Esophagus muscularis mucosa (tissue), 4 donors: ENCODE measurements at regions of chr19 and their contacts with region 1.

Region 1: GRCh38 chr19:49097455-49098288 is 12.4 kb downstream of the SNRNP70 start:
- DNase-seq: no peak
- H3K4me3 ChIP-seq: no peak overlapping the region
- H3K27ac ChIP-seq: peak overlapping the region in 1 of 4 donors; percentile 38
- H3K4me1 ChIP-seq: peaks cover 14 to 33% (median 29%) of the 10 kb centered on the region in 4 donors
- H3K27me3 ChIP-seq: no peaks in the 10 kb centered on the region
- CTCF ChIP-seq: peak in 2 of 3 experiments; percentile 98 to 99
- EP300 ChIP-seq: no peak
- POLR2A ChIP-seq: no peak

Region 2: DNA sequence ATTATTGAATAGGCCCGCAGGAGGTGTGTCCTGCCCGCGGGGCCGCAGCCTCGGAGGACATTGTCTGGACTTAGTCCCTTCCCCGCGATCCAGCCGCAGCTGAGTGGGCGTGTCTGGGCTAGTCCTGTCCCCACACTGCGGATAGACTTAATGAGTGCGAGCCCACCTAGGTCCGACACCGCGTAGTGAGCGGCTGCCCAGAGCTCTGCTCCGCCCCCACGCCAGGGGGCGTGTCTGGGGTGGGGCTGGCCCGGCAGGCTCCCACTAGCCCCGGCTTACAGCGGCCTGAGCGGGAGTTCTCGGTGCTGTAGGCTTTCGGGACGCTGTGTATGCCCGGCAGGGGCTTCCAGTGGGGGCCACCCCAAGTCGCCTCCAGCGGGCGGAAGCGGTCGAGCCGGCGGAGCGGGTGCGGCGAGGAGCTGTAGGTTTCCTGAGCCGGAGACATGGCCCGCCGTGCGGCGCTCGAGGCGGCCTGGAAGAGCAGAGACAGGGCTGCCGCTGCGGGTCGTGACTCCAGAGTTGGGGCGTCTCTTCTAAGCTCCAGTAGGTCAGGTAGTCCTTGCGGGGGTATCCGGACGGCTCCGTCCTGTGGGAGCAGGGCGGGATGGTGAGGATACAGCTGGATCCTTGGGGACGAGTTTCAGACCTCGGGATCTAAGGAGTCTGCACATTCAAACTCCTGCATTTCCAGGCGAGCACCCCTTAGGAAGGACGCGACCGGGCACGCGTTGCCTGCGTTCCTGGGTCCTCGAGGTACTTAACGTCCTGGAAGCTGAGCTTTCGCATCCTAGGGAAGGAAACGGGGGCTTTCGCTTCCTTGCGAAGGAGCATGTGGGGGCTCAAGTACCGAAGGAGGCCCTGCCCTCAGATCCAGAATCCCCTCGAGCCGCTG is 41.4 kb before region 1 on chr19:
- intact Hi-C with region 1: no loop called
- DNase-seq: no peak
- H3K4me3 ChIP-seq: peak overlapping the region; percentile 53 to 63 (median 60)
- H3K27ac ChIP-seq: no peak overlapping the region
- H3K4me1 ChIP-seq: peaks cover 16 to 27% (median 25%) of the 10 kb centered on the region in 4 donors
- H3K27me3 ChIP-seq: peaks cover 0 to 36% (median 9%) of the 10 kb centered on the region in 4 donors
- CTCF ChIP-seq: peak; percentile 36 to 41 (median 39)
- EP300 ChIP-seq: no peak
- POLR2A ChIP-seq: no peak

Region 3: GRCh38 chr19:49196527-49197240 is 99.0 kb after region 1 on chr19:
- intact Hi-C with region 1: loop called (anchors 5 kb)
- DNase-seq: no peak
- H3K4me3 ChIP-seq: peak overlapping the region in 3 of 4 donors; percentile 25 to 34 (median 33)
- H3K27ac ChIP-seq: peak overlapping the region; percentile 47 to 69 (median 56)
- H3K4me1 ChIP-seq: peaks cover 0 to 17% (median 12%) of the 10 kb centered on the region in 4 donors
- H3K27me3 ChIP-seq: no peaks in the 10 kb centered on the region
- CTCF ChIP-seq: no peak
- EP300 ChIP-seq: no peak
- POLR2A ChIP-seq: no peak